Mammary epithelial cell (primary cell): ENCODE measurements at regions of chr9 and their contacts with region 1.

Region 1: GRCh38 chr9:71806901-71807307 is 38.6 kb upstream of the CEMIP2 start:
- DNase-seq: peak; percentile 64
- H3K4me3 ChIP-seq: no peak overlapping the region
- H3K27ac ChIP-seq: no peak overlapping the region
- H3K4me1 ChIP-seq: no peaks in the 10 kb centered on the region
- H3K27me3 ChIP-seq: no peaks in the 10 kb centered on the region
- CTCF ChIP-seq: peak; percentile 97 to 99

Region 2: GRCh38 chr9:71604197-71605063 is 202.5 kb before region 1 on chr9:
- CTCF ChIA-PET with region 1: no interaction called
- dilution Hi-C with region 1: no loop called
- in situ Hi-C with region 1: loop called in 1 of 2 experiments (anchors 25 kb)
- intact Hi-C with region 1: loop called (anchors 5 kb)
- DNase-seq: peak; percentile 45
- H3K4me3 ChIP-seq: no peak overlapping the region
- H3K27ac ChIP-seq: no peak overlapping the region
- H3K4me1 ChIP-seq: peaks cover 6% of the 10 kb centered on the region
- H3K27me3 ChIP-seq: no peaks in the 10 kb centered on the region
- CTCF ChIP-seq: peak; percentile 71 to 83

Region 3: GRCh38 chr9:71975833-71976232 is 168.9 kb after region 1 on chr9:
- CTCF ChIA-PET with region 1: interaction called, 4 read pairs
- dilution Hi-C with region 1: no loop called
- in situ Hi-C with region 1: loop called in 1 of 2 experiments (anchors 25 kb)
- intact Hi-C with region 1: loop called (anchors 1 kb)
- DNase-seq: no peak
- H3K4me3 ChIP-seq: no peak overlapping the region
- H3K27ac ChIP-seq: no peak overlapping the region
- H3K4me1 ChIP-seq: no peaks in the 10 kb centered on the region
- H3K27me3 ChIP-seq: no peaks in the 10 kb centered on the region
- CTCF ChIP-seq: peak; percentile 22 to 55

Region 4: GRCh38 chr9:72022841-72023240 is 215.9 kb after region 1 on chr9:
- CTCF ChIA-PET with region 1: no interaction called
- dilution Hi-C with region 1: loop called (anchors 25 kb)
- in situ Hi-C with region 1: loop called in 1 of 2 experiments (anchors 25 kb)
- intact Hi-C with region 1: loop called (anchors 1 kb)
- DNase-seq: peak; percentile 89
- H3K4me3 ChIP-seq: no peak overlapping the region
- H3K27ac ChIP-seq: no peak overlapping the region
- H3K4me1 ChIP-seq: peaks cover 20% of the 10 kb centered on the region
- H3K27me3 ChIP-seq: no peaks in the 10 kb centered on the region
- CTCF ChIP-seq: no peak

Region 5: DNA sequence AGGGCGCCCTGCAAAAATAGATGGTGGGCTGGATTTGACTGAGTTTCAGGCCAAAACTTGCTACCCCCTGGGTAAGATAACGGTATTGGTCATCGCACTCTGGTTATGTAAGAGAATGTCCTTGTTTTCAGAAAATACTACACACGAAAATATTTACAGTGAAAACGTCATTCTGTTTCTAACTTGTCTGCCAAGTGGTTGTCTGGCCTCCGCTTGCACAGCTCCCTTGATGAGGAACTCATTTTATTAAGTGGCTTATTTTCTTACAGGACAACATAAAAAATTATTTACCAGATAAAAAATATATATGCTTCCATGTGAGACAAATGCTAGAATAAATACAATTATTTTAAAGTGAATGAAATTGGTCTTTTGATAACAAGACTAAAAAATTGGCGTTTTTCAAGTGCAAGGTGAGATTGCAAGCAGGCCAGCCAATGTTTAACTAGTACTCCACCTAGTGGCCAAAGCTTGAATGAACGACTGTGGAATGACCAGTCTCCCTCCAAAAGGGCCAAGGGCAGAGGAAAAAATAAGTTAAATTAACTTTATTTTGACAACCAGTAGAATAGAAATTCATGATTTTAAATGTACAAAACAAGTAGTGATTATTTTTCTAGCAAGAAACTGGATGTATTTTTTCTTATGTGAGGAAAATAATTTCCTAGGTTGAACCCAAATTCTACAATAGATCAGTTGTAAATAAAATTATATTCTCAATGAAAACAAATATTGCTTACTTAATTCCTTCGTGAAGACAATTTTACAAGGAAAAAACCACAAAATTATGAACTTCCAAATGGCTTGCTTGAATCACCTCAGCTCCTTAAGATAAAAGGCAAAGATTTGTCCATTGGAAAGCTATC is 464.9 kb after region 1 on chr9:
- CTCF ChIA-PET with region 1: no interaction called
- dilution Hi-C with region 1: loop called (anchors 25 kb)
- in situ Hi-C with region 1: loop called (anchors 10 to 25 kb)
- intact Hi-C with region 1: loop called (anchors 1 kb)
- DNase-seq: peak; percentile 35
- H3K4me3 ChIP-seq: no peak overlapping the region
- H3K27ac ChIP-seq: no peak overlapping the region
- H3K4me1 ChIP-seq: peaks cover 14% of the 10 kb centered on the region
- H3K27me3 ChIP-seq: no peaks in the 10 kb centered on the region
- CTCF ChIP-seq: peak; percentile 77 to 86